ENCODE measurements at regions of chr17 and their contacts with region 1.

Region 1: DNA sequence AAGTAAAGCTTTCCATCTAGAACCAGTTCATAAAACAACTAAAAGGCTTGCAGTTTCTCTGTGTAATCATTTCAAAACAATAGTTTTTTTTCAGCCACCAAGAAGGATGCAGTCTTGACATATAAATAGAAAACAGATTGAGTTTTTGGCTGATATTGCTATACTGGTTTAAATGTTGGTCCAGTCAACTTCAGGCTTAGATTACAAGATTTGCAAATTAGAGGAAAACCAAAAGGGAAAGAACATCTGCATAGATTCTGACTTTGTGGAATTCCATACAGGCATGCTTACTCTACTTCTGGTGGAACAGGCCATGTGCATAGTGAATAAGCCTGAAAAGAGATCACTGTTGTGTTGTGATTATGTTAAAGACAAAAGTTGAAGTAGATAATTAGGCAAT is 150.3 kb downstream of the BCAS3 start:
- DNase-seq: no peak
- H3K4me3 ChIP-seq: no peak overlapping the region
- H3K27ac ChIP-seq: no peak overlapping the region
- H3K4me1 ChIP-seq: peaks cover 4% of the 10 kb centered on the region
- H3K27me3 ChIP-seq: no peaks in the 10 kb centered on the region
- CTCF ChIP-seq: no peak
- POLR2A ChIP-seq: no peak

Region 2: DNA sequence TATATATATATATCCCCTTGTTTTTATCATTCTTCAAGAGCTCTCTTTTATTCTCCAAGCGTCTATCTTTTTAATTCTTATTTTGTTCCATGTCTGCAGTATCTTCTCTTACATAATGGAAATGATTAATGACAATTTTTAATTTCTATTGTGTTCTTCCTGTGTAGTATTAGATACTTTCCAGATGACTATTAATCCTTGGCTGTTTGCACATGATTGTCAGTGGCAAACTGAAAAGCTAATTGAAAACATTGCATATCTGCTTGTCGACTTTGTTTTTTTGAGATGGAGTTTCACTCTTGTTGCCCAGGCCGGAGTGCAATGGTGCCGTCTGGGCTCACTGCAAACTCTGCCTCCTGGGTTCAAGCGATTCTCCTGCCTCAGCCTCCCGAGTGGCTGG is 25.6 kb before region 1 on chr17:
- CTCF ChIA-PET with region 1: no interaction called
- POLR2A ChIA-PET with region 1: no interaction called
- dilution Hi-C with region 1: no loop called
- intact Hi-C with region 1: loop called (anchors 2 kb)
- DNase-seq: no peak
- H3K4me3 ChIP-seq: no peak overlapping the region
- H3K27ac ChIP-seq: no peak overlapping the region
- H3K4me1 ChIP-seq: no peaks in the 10 kb centered on the region
- H3K27me3 ChIP-seq: no peaks in the 10 kb centered on the region
- CTCF ChIP-seq: no peak
- POLR2A ChIP-seq: no peak